ENCODE measurements at regions of chr14 and their contacts with region 1.

Region 1: GRCh38 chr14:71355324-71356201 is 448.3 kb downstream of the PCNX1 start:
- DNase-seq: peak; percentile 46
- H3K4me3 Mint-ChIP-seq: peak overlapping the region; percentile 54
- H3K27ac Mint-ChIP-seq: peak overlapping the region; percentile 91
- H3K4me1 Mint-ChIP-seq: peaks cover 30% of the 10 kb centered on the region
- H3K27me3 Mint-ChIP-seq: no peaks in the 10 kb centered on the region
- CTCF ChIP-seq: no peak

Region 2: DNA sequence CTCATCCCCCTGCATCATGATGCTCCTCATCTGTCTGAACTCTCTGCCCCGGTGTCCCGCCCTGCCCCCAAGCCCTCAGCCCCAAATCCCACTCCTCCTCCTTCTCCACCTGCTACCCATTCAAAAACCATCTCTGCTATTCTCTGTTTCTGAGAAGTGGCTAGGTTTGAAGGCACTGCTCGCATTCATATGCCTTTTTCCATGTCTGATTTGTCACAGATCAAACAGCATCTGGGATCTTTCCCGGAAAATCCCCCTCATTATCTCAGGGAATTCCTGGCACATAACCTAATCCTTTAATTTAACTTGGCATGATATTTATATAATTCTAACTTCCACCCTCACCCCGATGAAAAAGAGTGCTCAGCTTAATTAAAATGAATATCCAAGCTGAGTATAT is 817.5 kb before region 1 on chr14:
- CTCF ChIA-PET with region 1: no interaction called
- POLR2A ChIA-PET with region 1: no interaction called
- intact Hi-C with region 1: no loop called
- DNase-seq: no peak
- H3K4me3 Mint-ChIP-seq: no peak overlapping the region
- H3K27ac Mint-ChIP-seq: no peak overlapping the region
- H3K4me1 Mint-ChIP-seq: no peaks in the 10 kb centered on the region
- H3K27me3 Mint-ChIP-seq: no peaks in the 10 kb centered on the region
- CTCF ChIP-seq: no peak

Region 3: DNA sequence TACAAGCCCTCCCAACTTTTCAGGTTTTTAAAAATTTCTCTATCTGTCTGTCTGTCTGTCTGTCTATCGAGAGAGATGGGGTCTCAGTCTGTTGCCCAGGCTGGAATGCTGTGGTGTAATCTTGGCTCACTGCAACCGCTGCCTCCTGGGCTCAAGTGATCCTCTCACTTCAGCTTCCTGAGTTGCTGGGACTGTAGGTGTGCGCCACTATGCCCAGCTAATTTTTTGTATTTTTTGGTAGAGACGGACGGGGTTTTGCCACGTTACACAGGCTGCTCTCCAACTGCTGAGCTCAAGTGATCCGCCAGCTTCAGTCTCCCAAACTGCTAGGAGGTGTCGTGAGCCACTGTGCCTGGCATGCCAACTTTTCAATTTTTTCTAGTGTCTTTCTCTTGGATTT is 11.1 kb before region 1 on chr14:
- CTCF ChIA-PET with region 1: no interaction called
- POLR2A ChIA-PET with region 1: interaction called, 12 read pairs
- intact Hi-C with region 1: no loop called
- DNase-seq: no peak
- H3K4me3 Mint-ChIP-seq: no peak overlapping the region
- H3K27ac Mint-ChIP-seq: peak overlapping the region; percentile 27
- H3K4me1 Mint-ChIP-seq: no peaks in the 10 kb centered on the region
- H3K27me3 Mint-ChIP-seq: no peaks in the 10 kb centered on the region
- CTCF ChIP-seq: no peak

Region 4: GRCh38 chr14:71371711-71372396 is 16.3 kb after region 1 on chr14:
- CTCF ChIA-PET with region 1: no interaction called
- POLR2A ChIA-PET with region 1: interaction called, 41 read pairs
- intact Hi-C with region 1: no loop called
- DNase-seq: peak; percentile 74
- H3K4me3 Mint-ChIP-seq: peak overlapping the region; percentile 57
- H3K27ac Mint-ChIP-seq: peak overlapping the region; percentile 95
- H3K4me1 Mint-ChIP-seq: peaks cover 11% of the 10 kb centered on the region
- H3K27me3 Mint-ChIP-seq: no peaks in the 10 kb centered on the region
- CTCF ChIP-seq: no peak

Measured in MCF 10A (cell line).